ENCODE measurements at regions of chr20 and their contacts with region 1.

Region 1: GRCh38 chr20:10060226-10060625 is 25.4 kb downstream of the ANKEF1 start:
- DNase-seq: no peak
- ATAC-seq: no peak
- H3K4me3 ChIP-seq: no peak overlapping the region
- H3K27ac ChIP-seq: no peak overlapping the region
- H3K4me1 ChIP-seq: no peaks in the 10 kb centered on the region
- H3K27me3 ChIP-seq: peaks cover 0 to 9% (median 3%) of the 10 kb centered on the region in 7 donors
- CTCF ChIP-seq: no peak

Region 2: DNA sequence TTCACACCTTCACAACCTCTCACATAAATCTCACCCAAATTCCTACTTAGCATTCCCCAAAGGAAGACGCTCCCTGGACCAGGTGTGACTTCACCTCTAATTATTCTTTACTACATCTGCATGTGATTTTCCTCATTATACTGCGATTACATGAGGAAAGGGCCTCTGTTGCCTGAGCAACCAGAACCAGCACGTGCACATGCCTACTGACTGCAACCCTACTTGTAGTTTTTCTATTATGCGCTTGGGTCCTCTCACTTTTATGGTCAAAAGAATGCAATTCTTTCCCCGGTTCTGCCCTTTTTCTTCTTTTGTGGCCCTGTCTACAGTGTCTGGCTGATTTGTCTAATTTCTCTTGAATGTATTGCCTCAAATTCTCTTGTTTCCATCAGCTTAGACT is 45.8 kb before region 1 on chr20:
- intact Hi-C with region 1: loop called in 1 of 10 experiments (anchors 10 kb)
- DNase-seq: no peak
- ATAC-seq: no peak
- H3K4me3 ChIP-seq: no peak overlapping the region
- H3K27ac ChIP-seq: no peak overlapping the region
- H3K4me1 ChIP-seq: no peaks in the 10 kb centered on the region
- H3K27me3 ChIP-seq: peaks cover 0 to 3% (median 0%) of the 10 kb centered on the region in 7 donors
- CTCF ChIP-seq: no peak

Region 3: GRCh38 chr20:10263385-10264165 is 203.3 kb after region 1 on chr20:
- intact Hi-C with region 1: no loop called
- DNase-seq: no peak
- ATAC-seq: no peak
- H3K4me3 ChIP-seq: no peak overlapping the region
- H3K27ac ChIP-seq: no peak overlapping the region
- H3K4me1 ChIP-seq: no peaks in the 10 kb centered on the region
- H3K27me3 ChIP-seq: no peaks in the 10 kb centered on the region
- CTCF ChIP-seq: no peak

Measured in heart right ventricle (tissue), 16 donors.